ENCODE measurements at regions of chr10 and their contacts with region 1.

Region 1: GRCh38 chr10:120824881-120825309 is 26.3 kb upstream of the WDR11 start:
- DNase-seq: no peak
- ATAC-seq: peak; percentile 76
- H3K4me3 ChIP-seq: no peak overlapping the region
- H3K27ac ChIP-seq: no peak overlapping the region
- H3K4me1 ChIP-seq: peaks cover 20% of the 10 kb centered on the region
- H3K27me3 ChIP-seq: no peaks in the 10 kb centered on the region
- CTCF ChIP-seq: peak; percentile 67 to 80 (median 77)
- EP300 ChIP-seq: no peak
- POLR2A ChIP-seq: no peak
- RAD21 ChIP-seq: peak; percentile 55; the same call in 1 of the 2 replicates

Region 2: DNA sequence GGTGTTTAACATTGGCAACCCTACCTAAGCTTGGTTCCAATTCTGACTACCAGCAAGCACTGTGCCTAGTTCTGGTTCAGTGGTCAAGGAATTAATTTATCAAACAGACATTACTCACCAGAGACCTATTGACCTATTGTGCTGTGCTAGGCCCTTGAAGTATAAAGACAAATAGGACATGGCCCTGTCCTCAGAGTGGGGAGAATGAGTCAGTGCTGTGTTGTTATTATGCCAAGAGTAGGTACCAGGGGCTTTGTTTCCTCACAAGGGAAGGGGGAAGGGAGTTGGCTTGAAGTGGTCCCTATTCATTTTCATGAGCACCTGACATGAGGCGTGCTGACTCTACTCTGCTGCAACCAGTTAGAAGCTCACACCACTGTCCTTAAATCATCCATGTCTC is 430.4 kb before region 1 on chr10:
- CTCF ChIA-PET with region 1: no interaction called
- POLR2A ChIA-PET with region 1: no interaction called
- RAD21 ChIA-PET with region 1: no interaction called
- SMC1A ChIA-PET with region 1: no interaction called
- in situ Hi-C with region 1: no loop called
- intact Hi-C with region 1: no loop called
- DNase-seq: no peak
- ATAC-seq: no peak
- H3K4me3 ChIP-seq: no peak overlapping the region
- H3K27ac ChIP-seq: no peak overlapping the region
- H3K4me1 ChIP-seq: no peaks in the 10 kb centered on the region
- H3K27me3 ChIP-seq: no peaks in the 10 kb centered on the region
- CTCF ChIP-seq: no peak
- EP300 ChIP-seq: no peak
- POLR2A ChIP-seq: no peak
- RAD21 ChIP-seq: no peak

Region 3: GRCh38 chr10:120783867-120784266 is 41.0 kb before region 1 on chr10:
- CTCF ChIA-PET with region 1: no interaction called
- POLR2A ChIA-PET with region 1: no interaction called
- RAD21 ChIA-PET with region 1: no interaction called
- SMC1A ChIA-PET with region 1: no interaction called
- in situ Hi-C with region 1: no loop called
- intact Hi-C with region 1: no loop called
- DNase-seq: no peak
- ATAC-seq: no peak
- H3K4me3 ChIP-seq: no peak overlapping the region
- H3K27ac ChIP-seq: no peak overlapping the region
- H3K4me1 ChIP-seq: no peaks in the 10 kb centered on the region
- H3K27me3 ChIP-seq: no peaks in the 10 kb centered on the region; a peak in 1 of 4 replicates
- CTCF ChIP-seq: no peak
- EP300 ChIP-seq: no peak
- POLR2A ChIP-seq: no peak
- RAD21 ChIP-seq: no peak

Region 4: GRCh38 chr10:120841522-120842189 is 16.8 kb after region 1 on chr10:
- CTCF ChIA-PET with region 1: interaction called, 28 read pairs
- POLR2A ChIA-PET with region 1: no interaction called
- RAD21 ChIA-PET with region 1: no interaction called
- SMC1A ChIA-PET with region 1: no interaction called
- in situ Hi-C with region 1: no loop called
- intact Hi-C with region 1: no loop called
- DNase-seq: no peak
- ATAC-seq: no peak
- H3K4me3 ChIP-seq: no peak overlapping the region
- H3K27ac ChIP-seq: no peak overlapping the region
- H3K4me1 ChIP-seq: no peaks in the 10 kb centered on the region
- H3K27me3 ChIP-seq: no peaks in the 10 kb centered on the region
- CTCF ChIP-seq: no peak
- EP300 ChIP-seq: no peak
- POLR2A ChIP-seq: no peak
- RAD21 ChIP-seq: no peak

Measured in GM12878 (cell line).